ENCODE measurements at regions of chr3 and their contacts with region 1.

Region 1: GRCh38 chr3:187210545-187211327 is 13.4 kb downstream of the RTP1 start:
- DNase-seq: no peak
- ATAC-seq: peak in 3 of 4 donors; percentile 33 to 59 (median 47)
- H3K4me3 ChIP-seq: no peak overlapping the region
- H3K27ac ChIP-seq: peak overlapping the region in 4 of 12 donors; percentile 26 to 65 (median 56)
- H3K4me1 ChIP-seq: peaks cover 0 to 49% (median 18%) of the 10 kb centered on the region in 12 donors
- H3K27me3 ChIP-seq: no peaks in the 10 kb centered on the region
- CTCF ChIP-seq: no peak
- POLR2A ChIP-seq: no peak

Region 2: GRCh38 chr3:187243933-187244524 is 33.3 kb after region 1 on chr3:
- intact Hi-C with region 1: no loop called
- DNase-seq: peak in 1 of 5 donors; percentile 44
- ATAC-seq: peak; percentile 44 to 64 (median 58)
- H3K4me3 ChIP-seq: no peak overlapping the region
- H3K27ac ChIP-seq: peak overlapping the region in 1 of 12 donors; percentile 25
- H3K4me1 ChIP-seq: no peaks in the 10 kb centered on the region
- H3K27me3 ChIP-seq: no peaks in the 10 kb centered on the region
- CTCF ChIP-seq: no peak
- POLR2A ChIP-seq: no peak

Region 3: DNA sequence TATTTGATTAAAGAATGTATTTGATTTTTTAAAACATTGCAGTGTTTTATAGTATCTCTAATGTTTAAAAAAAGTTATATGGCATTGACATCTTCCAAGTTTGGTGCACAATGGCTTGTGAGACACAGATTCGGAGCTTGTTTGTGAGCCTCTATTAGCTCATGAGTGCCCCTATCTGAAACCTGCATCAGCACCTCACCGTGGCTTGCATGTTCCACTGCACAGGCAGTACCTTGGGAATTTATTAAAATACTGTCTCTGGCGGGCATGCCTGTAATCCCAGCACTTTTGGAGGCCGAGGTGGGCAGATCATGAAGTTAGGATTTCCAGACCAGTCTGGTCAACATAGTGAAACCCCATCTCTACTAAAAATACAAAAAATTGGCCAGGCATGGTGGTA is 498.4 kb after region 1 on chr3:
- intact Hi-C with region 1: loop called in 1 of 10 experiments (anchors 10 kb)
- DNase-seq: no peak
- ATAC-seq: no peak
- H3K4me3 ChIP-seq: no peak overlapping the region
- H3K27ac ChIP-seq: no peak overlapping the region
- H3K4me1 ChIP-seq: peaks cover 0 to 22% (median 3%) of the 10 kb centered on the region in 12 donors
- H3K27me3 ChIP-seq: no peaks in the 10 kb centered on the region
- CTCF ChIP-seq: no peak
- POLR2A ChIP-seq: no peak